HEK293 (cell line): ENCODE measurements at regions of chr1 and their contacts with region 1.

Region 1: DNA sequence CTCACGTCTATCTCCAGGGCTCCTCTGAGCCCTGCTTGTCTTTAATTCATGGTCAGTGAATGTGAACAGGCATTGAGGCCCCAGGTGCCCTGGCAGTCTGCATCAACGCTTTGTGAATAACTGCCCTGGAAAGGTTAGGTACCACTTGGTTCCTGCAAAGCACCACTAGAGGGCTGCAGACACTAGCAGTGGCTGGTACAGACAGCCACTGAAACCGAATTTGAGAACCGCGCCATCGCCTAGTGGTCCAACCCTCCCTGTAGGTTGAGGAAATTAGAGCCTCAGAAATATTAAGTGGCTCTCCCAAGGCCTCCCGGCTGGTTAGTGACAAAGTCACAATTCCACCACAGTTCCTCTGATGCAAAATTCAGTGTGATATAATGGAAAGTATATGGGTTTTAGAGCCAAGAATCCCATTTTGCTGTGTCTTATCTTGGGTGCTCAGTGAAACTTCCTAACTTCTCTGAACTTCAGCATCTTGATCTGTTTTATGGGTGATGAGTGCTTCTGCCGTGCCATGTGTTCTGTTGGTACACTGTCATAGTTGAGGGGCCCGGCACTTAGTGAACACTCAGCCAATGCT is 46.2 kb upstream of the BCL9 start:
- H3K4me3 ChIP-seq: no peak overlapping the region
- H3K27ac ChIP-seq: no peak overlapping the region
- H3K4me1 ChIP-seq: no peaks in the 10 kb centered on the region
- CTCF ChIP-seq: peak; percentile 83

Region 2: GRCh38 chr1:147627435-147628110 is 132.5 kb after region 1 on chr1:
- CTCF ChIA-PET with region 1: interaction called, 17 read pairs
- POLR2A ChIA-PET with region 1: no interaction called
- H3K4me3 ChIP-seq: no peak overlapping the region
- H3K27ac ChIP-seq: no peak overlapping the region
- H3K4me1 ChIP-seq: no peaks in the 10 kb centered on the region
- CTCF ChIP-seq: peak; percentile 57; the same call in 1 of the 2 replicates

Region 3: GRCh38 chr1:147640553-147641165 is 145.6 kb after region 1 on chr1:
- CTCF ChIA-PET with region 1: interaction called, 11 read pairs
- POLR2A ChIA-PET with region 1: no interaction called
- H3K4me3 ChIP-seq: no peak overlapping the region
- H3K27ac ChIP-seq: no peak overlapping the region
- H3K4me1 ChIP-seq: no peaks in the 10 kb centered on the region
- CTCF ChIP-seq: peak; percentile 66

Region 4: GRCh38 chr1:147665521-147665920 is 170.4 kb after region 1 on chr1:
- CTCF ChIA-PET with region 1: no interaction called
- POLR2A ChIA-PET with region 1: no interaction called
- H3K4me3 ChIP-seq: no peak overlapping the region
- H3K27ac ChIP-seq: no peak overlapping the region
- H3K4me1 ChIP-seq: no peaks in the 10 kb centered on the region; the same call in 1 of the 2 replicates
- CTCF ChIP-seq: no peak

Region 5: GRCh38 chr1:147676290-147677053 is 181.4 kb after region 1 on chr1:
- CTCF ChIA-PET with region 1: no interaction called
- POLR2A ChIA-PET with region 1: no interaction called
- H3K4me3 ChIP-seq: no peak overlapping the region
- H3K27ac ChIP-seq: no peak overlapping the region
- H3K4me1 ChIP-seq: no peaks in the 10 kb centered on the region
- CTCF ChIP-seq: no peak